ENCODE measurements at regions of chr20 and their contacts with region 1.

Region 1: DNA sequence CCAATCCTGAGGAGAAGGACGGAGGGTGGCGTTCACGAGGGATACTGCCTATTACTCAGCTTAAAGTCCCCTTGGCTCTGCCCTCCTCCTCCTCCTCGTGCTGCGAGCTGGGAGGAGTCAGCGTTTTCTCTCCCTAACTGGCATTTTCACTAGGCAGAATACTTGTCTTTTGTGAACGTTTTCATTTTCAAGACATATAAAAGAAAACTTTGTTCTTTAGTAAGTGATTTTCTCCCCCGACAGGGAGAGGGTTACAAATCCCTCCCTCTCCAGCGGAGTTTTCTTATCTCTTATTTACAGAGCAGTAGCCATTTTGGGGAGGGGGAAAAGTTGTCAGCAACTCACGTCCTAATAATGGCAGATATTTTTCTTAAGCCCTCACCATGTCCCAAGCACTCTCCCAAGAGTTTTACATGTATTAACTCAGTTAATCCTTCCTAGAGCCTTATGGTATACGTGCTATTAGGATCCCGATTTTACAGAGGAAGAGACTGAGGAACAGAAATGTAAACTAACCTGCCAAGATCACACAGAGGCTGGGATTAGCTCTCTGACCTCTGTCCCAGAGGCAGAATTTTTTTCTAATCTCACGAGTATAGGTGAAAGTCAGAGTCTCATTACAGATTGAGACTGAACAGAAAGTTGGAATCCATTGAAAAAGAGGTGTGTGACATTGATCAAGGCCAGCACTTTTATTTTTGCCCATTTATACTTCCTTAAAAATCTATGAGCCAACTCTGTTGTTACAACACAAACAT is 30.0 kb upstream of the ZNF217 start:
- DNase-seq: peak; percentile 78
- ATAC-seq: peak; percentile 88

Region 2: GRCh38 chr20:53642172-53643030 is 18.8 kb after region 1 on chr20:
- intact Hi-C with region 1: loop called (anchors 1 kb)
- DNase-seq: no peak
- ATAC-seq: peak; percentile 85

Region 3: DNA sequence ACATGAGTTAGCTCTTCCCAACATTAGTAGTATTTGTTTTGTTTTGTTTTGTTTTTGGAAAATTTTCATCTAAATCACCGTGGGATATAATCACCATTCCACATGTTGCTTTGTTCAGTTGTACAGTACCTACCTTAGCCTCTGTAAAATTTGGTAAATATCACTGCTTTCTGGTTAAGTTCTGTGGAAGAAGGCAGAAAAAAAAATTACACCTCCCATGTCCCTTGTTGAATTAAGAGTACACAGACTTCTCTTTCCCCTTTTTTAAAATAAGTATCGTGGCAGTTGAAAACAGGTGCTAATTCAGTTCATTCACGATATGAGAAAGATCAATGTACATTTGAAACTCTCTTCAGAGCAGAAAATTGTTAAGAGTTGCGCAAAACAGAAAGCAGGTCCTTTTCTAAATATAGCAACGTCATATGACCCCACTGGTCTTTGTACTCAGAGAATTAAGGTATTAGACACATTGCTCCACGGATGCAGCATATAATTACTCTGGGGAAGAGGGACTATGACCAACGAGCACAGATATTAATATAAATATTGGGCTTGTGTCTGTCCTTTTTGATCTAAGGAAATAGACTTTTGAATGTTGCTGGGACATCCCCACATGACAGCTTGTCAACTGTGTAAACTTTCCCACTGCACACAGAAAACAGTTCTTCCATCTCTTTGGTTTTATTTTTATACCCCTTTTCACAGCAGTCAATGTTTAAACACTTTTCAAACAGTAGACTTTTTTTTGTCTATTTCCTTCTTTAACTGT is 28.6 kb after region 1 on chr20:
- intact Hi-C with region 1: loop called (anchors 5 kb)
- DNase-seq: no peak
- ATAC-seq: no peak

Region 4: DNA sequence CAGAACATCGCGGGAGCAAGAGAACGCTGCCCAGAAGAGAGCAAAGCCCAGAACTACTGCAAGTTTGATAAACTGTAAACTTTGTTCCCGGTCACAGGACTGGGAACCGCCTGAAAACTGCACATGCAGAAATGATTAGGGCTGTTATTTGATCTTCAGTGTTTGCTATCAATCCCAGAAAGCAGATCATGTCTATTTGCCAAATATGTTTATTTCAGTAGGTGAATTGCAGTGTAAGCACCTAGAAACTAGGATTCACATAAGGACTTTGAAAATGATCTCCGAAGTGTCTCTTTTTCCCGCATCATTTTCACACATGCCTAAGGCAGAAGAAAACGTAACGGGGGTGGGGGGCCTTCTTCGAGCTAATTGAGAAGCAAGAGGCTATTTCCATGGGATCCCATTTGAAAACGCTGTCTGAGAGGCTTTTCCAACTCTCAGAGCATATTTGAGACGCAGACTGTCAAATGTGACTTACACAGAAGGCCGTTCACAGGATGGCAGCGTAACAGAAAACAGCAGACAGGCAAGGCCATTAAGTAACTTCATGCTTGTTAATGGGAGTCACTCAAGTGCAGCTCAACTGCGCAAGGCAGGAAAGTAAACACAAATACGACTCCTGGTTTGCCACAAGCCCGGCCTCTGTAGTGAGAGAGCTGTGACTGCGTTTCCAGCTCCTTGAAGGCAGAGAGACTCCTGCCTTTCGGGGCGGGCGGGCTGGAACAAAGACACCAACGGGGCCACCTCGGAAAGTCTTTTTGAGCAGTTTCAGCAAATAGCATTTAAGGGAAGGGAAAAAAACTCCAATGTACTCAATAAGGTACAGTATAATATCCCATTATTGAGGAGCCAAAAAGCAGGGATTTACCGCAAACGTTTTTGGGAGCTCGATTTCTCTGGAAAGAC is 114.7 kb after region 1 on chr20:
- intact Hi-C with region 1: no loop called
- DNase-seq: no peak
- ATAC-seq: peak; percentile 81

Region 5: GRCh38 chr20:53869466-53870258 is 246.0 kb after region 1 on chr20:
- intact Hi-C with region 1: loop called (anchors 5 kb)
- DNase-seq: no peak
- ATAC-seq: peak; percentile 90